ENCODE measurements at regions of chr6 and their contacts with region 1.

Region 1: DNA sequence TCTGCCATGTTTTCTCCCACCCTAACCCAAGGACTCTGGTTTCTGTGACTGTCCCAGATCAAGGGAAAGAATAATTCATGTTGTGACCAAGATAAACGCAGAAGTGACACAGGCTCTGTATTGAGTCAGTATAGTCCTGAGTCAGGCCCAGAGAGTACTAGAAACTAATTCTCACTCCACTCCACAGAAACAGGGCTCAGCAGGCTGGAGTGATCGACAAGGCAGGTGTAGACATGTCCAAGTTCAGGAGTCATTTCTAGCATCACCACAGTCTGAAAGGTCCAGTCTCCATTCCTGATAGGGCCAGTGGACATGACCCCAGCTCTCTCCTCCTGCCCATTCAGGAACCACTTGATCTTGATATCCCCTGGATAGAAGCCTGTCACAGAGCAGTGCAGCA is 2.7 kb downstream of the HLA-DOB start:
- DNase-seq: no peak

Region 2: GRCh38 chr6:31922942-31923341 is 891.2 kb before region 1 on chr6:
- intact Hi-C with region 1: loop called in 1 of 2 experiments (anchors 5 kb)
- DNase-seq: no peak

Measured in posterior vena cava (tissue), 2 donors.